Activated T-helper 2 cell treated with anti-CD3 and anti-CD28 coated beads, Interferon-gamma antibody, Interleukin-2, Interleukin-4, amounts not matched to agents 10 μg/mL and 5 μg/mL and 100 μg/mL, durations not matched to agents 14 hours and 24 hours and 36 hours (primary cell): ENCODE measurements at regions of chr13 and their contacts with region 1.

Region 1: DNA sequence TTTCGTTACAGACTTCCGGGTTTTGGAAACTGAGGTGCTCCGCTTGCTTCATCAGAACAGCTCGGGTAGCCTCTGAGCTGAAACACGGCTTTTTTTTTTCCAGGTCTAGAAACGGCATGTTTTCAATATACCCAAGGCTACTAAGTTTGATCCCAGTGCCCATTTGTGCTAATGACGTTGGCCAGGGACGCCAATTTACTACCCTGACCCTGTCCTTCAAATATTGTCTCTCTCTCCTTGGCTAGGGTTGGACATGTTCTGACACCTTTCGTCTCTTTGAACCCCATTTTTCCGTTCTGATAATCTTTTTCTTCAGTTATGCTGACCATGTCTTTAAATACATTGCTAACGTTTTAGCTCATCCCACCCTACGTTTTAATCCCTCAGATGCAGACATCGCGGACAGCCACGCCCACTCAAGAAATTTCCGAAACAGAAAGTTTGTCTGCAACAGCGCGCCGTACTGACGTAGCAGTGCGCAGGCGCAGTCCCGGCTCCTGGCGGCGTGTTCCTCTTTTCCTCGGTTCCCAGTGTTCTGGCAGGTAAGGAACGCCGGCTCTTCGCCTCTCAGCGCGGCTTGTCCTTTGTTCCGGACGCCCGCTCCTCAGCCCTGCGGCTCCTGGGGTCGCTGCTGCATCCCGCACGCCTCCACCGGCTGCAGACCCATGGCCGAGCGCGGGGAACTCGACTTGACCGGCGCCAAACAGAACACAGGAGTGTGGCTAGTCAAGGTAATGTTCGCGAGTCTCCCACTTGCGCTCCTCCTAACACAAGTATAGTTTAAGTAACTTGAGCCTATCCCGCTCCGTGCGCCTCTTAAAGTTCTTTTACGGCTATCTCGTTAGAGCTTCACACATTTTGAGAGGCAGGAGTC is at the start of gene GTF2F2:
- DNase-seq: peak; percentile 84
- H3K4me3 Mint-ChIP-seq: no peak within 1 kb of the TSS
- H3K27ac Mint-ChIP-seq: no peak within 1 kb of the TSS
- H3K4me1 Mint-ChIP-seq: peaks cover 8% of the 10 kb centered on the region
- H3K27me3 Mint-ChIP-seq: no peaks in the 10 kb centered on the region
- total RNA-seq, gene GTF2F2: 26.9 and 28.9 TPM in 2 replicates

Region 2: DNA sequence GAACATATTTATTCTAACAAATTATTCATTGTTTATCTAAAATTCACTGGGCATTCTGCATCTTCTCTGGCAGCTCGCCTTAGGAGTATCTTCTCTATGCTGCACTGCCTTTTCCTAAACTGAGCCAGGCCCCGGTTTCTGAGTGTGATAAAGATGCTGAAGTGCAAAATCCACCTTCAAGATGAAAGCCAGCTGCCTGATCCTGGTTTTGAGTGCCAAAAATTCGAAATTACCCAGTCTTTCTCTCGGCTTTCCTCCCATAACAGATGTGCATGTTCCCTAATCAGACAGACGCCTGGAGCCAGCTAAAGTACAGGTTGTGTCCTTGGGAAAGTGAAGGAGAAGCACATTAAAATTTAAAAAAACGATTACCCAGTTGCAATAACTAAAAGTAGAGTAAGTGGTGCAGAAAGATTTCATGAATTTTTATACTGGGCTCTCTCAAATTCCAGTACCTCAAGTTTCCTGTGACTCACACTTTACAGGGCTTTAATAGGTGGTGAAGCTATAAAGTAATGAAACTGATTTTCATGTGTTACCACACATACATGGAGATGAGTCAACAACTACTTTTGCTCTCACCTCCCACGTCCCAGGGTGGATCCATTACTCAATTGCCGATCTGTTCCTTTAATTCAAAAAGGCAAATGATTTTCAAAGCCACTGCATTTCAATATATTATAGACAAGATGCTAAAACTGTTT is 64.9 kb before region 1 on chr13:
- intact Hi-C with region 1: loop called (anchors 1 kb)
- DNase-seq: no peak
- H3K4me3 Mint-ChIP-seq: no peak overlapping the region
- H3K27ac Mint-ChIP-seq: no peak overlapping the region
- H3K4me1 Mint-ChIP-seq: peaks cover 18% of the 10 kb centered on the region
- H3K27me3 Mint-ChIP-seq: peaks cover 62% of the 10 kb centered on the region

Region 3: GRCh38 chr13:45167611-45168556 is 47.7 kb after region 1 on chr13:
- intact Hi-C with region 1: loop called (anchors 5 kb)
- DNase-seq: no peak
- H3K4me3 Mint-ChIP-seq: no peak overlapping the region
- H3K27ac Mint-ChIP-seq: no peak overlapping the region
- H3K4me1 Mint-ChIP-seq: peaks cover 8% of the 10 kb centered on the region
- H3K27me3 Mint-ChIP-seq: no peaks in the 10 kb centered on the region

Region 4: DNA sequence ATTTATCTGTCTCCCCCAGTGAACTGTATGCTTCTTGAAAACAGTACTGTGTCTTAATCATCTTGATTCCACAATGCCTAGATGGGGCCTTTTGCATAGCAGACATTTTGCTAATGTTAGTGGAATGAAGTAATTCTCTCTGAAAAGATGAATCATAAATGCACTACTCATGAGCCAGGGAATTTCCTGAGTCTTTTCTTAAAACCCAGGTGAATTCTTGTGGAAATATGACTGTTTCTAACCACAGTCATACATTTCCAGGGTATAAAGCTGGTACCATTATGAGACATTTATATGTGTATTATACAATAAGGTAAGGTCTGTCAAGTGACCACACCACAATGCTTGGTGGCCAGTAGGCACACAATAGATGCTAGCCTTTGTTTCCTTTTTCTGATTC is 86.1 kb after region 1 on chr13:
- intact Hi-C with region 1: loop called (anchors 10 kb)
- DNase-seq: no peak
- H3K4me3 Mint-ChIP-seq: no peak overlapping the region
- H3K27ac Mint-ChIP-seq: no peak overlapping the region
- H3K4me1 Mint-ChIP-seq: peaks cover 13% of the 10 kb centered on the region
- H3K27me3 Mint-ChIP-seq: no peaks in the 10 kb centered on the region